CD8-positive, alpha-beta T cell (primary cell): ENCODE measurements at regions of chr6 and their contacts with region 1.

Region 1: DNA sequence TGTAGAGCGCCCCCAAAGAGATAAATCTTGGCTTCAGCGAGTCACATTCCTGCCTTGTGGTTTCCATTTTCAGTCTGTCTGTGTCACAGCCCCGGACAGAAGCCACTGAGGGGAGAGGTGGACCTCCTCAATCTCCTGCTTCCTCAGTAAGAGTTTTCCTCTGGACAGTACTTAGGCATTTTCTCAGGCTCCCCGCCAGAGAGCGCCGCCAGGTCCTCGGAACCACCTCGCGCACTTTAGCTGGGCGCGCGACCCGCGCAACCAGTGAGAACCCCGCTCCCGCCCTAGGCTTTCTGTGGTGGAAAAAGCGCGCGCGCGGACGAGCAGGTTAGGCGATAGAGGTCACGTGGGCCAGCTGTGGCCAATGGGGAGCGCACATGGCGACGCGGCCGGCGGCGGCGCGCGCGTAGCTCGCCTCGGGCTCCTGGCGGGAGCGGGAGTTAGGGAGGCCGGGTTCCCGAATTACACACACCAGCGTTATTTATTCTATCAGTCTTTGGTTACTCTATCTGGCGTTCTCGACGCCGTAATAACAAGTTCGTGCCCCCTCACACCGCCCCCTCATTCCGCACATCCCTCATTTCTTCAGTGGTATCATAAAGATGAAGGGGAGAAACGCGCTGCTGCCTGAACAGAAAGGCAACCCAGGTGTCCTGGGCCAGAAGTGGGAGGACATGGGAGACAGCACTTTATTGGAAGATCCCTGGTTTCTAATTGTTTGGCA is 19.4 kb downstream of the PXT1 start:
- DNase-seq: peak; percentile 96 to 99 (median 98)
- ATAC-seq: peak; percentile 96
- H3K4me3 ChIP-seq: peak overlapping the region; percentile 63 to 74
- H3K4me3 Mint-ChIP-seq: peak overlapping the region; percentile 95
- H3K27ac ChIP-seq: peak overlapping the region; percentile 60 to 80
- H3K27ac Mint-ChIP-seq: peak overlapping the region; percentile 95
- H3K4me1 ChIP-seq: peaks cover 12% of the 10 kb centered on the region
- H3K4me1 Mint-ChIP-seq: peaks cover 11% of the 10 kb centered on the region
- H3K27me3 ChIP-seq: no peaks in the 10 kb centered on the region
- H3K27me3 Mint-ChIP-seq: no peaks in the 10 kb centered on the region
- CTCF ChIP-seq: peak; percentile 74

Region 2: DNA sequence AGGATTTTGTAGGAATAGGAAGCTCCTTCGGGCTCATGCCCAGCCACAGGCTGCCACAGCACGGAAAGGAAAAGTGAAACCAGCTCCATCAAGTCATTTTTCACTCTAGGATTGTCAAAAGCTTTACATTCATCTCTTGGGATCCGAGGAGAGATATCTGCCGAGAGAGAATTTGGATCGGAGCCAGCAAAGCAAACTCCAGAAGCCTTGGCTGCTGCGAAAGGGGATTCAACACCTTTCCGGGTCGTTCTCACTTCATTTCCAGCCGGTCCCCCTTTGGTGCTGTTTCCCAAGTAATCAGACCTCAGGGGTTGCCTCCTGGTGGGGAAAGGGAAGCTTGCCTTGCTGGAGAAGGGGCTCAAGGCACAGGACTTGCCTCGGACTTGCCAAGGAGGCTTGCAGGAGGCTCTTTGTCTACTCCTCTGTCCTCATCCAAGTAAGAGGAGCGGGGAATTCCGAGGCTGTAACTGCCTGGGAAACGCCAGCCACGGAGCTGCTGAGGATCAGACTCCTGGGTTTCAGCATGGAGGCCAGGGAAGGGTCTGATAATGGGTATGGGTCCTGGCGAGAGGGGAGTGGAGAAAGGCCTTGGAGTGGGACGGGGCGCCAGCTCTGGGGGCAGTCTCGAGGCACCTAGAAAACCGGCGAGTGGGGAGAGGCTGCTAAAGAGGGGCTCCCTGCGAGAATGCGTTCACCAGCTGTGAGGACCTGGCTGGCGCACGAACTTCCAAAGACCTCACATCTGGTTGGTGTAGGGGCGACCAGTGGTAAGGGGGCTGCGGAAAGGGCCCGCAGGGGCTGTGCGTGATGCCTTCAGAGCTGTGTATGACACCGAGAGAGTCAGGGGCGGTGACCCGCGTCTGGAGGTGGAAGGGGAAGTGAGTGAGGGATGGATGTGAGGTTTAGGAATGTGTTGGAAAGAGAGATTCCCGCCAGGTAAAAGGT is 36.5 kb before region 1 on chr6:
- CTCF ChIA-PET with region 1: no interaction called
- POLR2A ChIA-PET with region 1: no interaction called
- intact Hi-C with region 1: no loop called
- DNase-seq: peak in 5 of 9 experiments; percentile 12 to 42 (median 21)
- ATAC-seq: peak; percentile 60
- H3K4me3 ChIP-seq: peak overlapping the region; percentile 62 to 69
- H3K4me3 Mint-ChIP-seq: peak overlapping the region; percentile 93
- H3K27ac ChIP-seq: no peak overlapping the region
- H3K27ac Mint-ChIP-seq: peak overlapping the region; percentile 3
- H3K4me1 ChIP-seq: peaks cover 11% of the 10 kb centered on the region
- H3K4me1 Mint-ChIP-seq: peaks cover 20% of the 10 kb centered on the region
- H3K27me3 ChIP-seq: peaks cover 0 to 5% of the 10 kb centered on the region in 2 experiments
- H3K27me3 Mint-ChIP-seq: peaks cover 33% of the 10 kb centered on the region
- CTCF ChIP-seq: no peak

Region 3: DNA sequence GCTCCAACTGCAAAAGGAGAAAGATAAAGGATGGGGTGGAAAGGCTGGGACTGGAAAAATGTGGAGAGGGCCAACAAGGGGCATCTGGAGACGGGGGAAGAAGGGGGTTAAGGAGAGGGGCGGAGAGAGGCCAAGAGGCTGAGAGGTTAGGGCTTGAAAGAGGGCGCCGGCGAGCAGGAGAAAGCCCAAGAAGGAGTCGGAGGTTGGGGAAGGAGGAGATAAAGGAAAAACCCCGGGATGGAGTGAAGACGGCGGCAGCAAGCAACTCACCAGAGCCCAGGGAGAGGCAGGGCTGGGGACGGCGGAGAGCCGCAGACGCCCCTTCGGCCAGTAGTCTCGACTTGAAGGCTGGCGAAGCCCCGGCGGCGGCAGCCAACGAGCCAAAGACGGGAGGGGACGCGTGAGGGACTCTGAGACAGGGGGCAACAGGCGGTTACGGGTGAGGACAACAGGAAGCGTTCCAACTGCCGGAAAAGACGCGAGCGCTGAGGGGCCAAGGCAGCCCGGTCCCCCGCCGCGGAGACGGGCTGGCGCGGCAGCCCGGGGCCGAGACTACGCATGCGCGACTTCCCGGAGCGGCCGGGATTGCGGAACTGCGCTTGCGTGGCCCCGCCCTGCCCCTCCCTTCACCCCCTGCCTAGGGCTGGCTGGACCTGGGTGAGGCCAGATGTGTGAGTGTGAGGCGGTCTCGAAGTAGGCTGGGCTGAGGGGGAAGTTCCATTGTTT is 123.8 kb after region 1 on chr6 and contains the start of gene STK38:
- CTCF ChIA-PET with region 1: interaction called, 4 read pairs
- POLR2A ChIA-PET with region 1: interaction called, 3 read pairs
- intact Hi-C with region 1: loop called in 1 of 2 experiments (anchors 2 kb)
- DNase-seq: peak; percentile 85 to 98 (median 94)
- ATAC-seq: peak; percentile 72
- H3K4me3 ChIP-seq: peak within 1 kb of the TSS; percentile 82 to 85
- H3K4me3 Mint-ChIP-seq: peak within 1 kb of the TSS; percentile 99
- H3K27ac ChIP-seq: peak within 1 kb of the TSS; percentile 92 to 94
- H3K27ac Mint-ChIP-seq: peak within 1 kb of the TSS; percentile 99
- H3K4me1 ChIP-seq: peaks cover 32% of the 10 kb centered on the region
- H3K4me1 Mint-ChIP-seq: peaks cover 52% of the 10 kb centered on the region
- H3K27me3 ChIP-seq: no peaks in the 10 kb centered on the region
- H3K27me3 Mint-ChIP-seq: no peaks in the 10 kb centered on the region
- CTCF ChIP-seq: no peak
- total RNA-seq, gene STK38: 37.6 to 38.7 TPM

Region 4: GRCh38 chr6:36576561-36576960 is 153.3 kb after region 1 on chr6:
- CTCF ChIA-PET with region 1: interaction called, 6 read pairs
- POLR2A ChIA-PET with region 1: interaction called, 3 read pairs
- intact Hi-C with region 1: loop called in 1 of 2 experiments (anchors 1 kb)
- DNase-seq: no peak
- ATAC-seq: no peak
- H3K4me3 ChIP-seq: no peak overlapping the region
- H3K4me3 Mint-ChIP-seq: no peak overlapping the region
- H3K27ac ChIP-seq: no peak overlapping the region
- H3K27ac Mint-ChIP-seq: no peak overlapping the region
- H3K4me1 ChIP-seq: peaks cover 6% of the 10 kb centered on the region
- H3K4me1 Mint-ChIP-seq: peaks cover 6% of the 10 kb centered on the region
- H3K27me3 ChIP-seq: no peaks in the 10 kb centered on the region
- H3K27me3 Mint-ChIP-seq: no peaks in the 10 kb centered on the region
- CTCF ChIP-seq: no peak

Region 5: DNA sequence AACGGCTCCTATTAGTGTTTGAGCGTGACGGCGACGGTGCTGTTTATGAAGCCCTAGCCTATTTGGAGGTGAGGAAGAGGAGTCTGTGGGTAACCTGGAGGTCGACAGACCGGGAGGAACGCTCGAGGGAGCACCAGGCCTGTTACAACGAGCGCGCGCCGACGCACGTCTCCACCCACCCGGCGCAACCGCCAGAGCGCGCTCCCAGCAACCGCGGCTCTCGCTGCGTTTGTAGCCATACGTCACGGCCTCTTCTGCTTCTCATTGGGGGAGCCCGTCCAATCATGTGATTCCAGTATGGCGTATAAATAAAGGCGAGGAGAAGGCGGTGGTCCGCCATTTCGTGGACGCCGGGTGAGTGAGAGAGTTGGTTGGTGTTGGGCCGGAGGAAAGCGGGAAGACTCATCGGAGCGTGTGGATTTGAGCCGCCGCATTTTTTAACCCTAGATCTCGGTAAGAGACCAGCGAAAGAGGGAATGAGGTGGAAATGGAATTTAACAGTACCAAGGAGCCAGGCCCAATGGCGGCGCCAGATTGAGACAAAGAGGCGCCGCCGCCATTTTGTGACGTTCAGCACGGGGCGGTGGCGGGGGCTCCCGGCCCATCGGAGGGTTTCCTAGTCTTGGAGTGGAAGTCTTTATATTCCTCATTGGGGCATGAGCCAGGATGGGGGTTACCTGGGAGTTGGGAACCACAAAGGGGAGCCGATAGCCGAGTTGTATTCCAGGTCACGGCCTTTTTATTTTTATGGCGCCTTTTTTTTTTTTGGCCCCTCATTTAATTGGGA is 171.0 kb after region 1 on chr6 and contains the start of gene SRSF3:
- CTCF ChIA-PET with region 1: interaction called, 5 read pairs
- POLR2A ChIA-PET with region 1: interaction called, 4 read pairs
- intact Hi-C with region 1: loop called (anchors 1 kb)
- DNase-seq: peak; percentile 90 to 99 (median 94)
- ATAC-seq: peak; percentile 86
- H3K4me3 ChIP-seq: peak within 1 kb of the TSS; percentile 72 to 74
- H3K4me3 Mint-ChIP-seq: peak within 1 kb of the TSS; percentile 97
- H3K27ac ChIP-seq: peak within 1 kb of the TSS; percentile 93 to 95
- H3K27ac Mint-ChIP-seq: peak within 1 kb of the TSS; percentile 99
- H3K4me1 ChIP-seq: peaks cover 42% of the 10 kb centered on the region
- H3K4me1 Mint-ChIP-seq: peaks cover 45% of the 10 kb centered on the region
- H3K27me3 ChIP-seq: no peaks in the 10 kb centered on the region
- H3K27me3 Mint-ChIP-seq: no peaks in the 10 kb centered on the region
- CTCF ChIP-seq: no peak
- total RNA-seq, gene SRSF3: 620 to 627 TPM

Region 6: DNA sequence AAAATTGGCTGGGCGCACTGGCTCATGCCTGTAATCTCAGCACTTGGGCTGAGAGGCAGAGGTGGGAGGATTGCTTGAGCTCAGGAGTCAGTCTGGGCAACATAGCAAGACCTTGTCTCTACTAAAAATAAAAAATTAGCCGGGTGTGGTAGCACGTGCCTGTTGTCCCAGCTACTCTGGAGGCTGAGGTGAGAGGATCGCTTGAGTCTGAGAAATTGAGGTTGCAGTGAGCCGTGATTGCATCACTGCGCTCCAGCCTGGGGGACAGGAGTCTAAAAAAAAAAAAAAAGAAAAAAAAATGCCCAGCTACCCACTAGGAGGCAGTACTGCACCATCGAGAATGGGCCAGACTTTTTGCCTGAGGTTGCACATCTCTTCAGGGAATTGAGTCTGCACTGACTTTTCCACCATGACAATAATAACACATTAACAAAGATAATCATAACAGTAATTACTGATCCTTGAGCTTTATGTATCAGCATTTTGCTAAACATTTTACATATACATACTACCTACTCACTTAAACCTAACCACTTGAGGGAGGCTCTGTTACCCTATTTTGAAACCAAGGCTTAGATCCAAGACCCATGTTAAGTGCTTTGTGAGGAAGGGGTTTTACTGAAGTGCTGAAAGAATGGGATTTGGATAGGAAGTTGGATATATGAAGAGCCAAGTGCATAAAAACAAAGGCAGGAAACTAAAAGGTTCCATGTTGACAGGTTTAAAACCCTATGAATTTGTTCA is 191.9 kb after region 1 on chr6:
- CTCF ChIA-PET with region 1: interaction called, 3 read pairs
- POLR2A ChIA-PET with region 1: interaction called, 3 read pairs
- intact Hi-C with region 1: loop called in 1 of 2 experiments (anchors 1 kb)
- DNase-seq: peak in 5 of 9 experiments; percentile 31 to 80 (median 54)
- ATAC-seq: peak; percentile 84
- H3K4me3 ChIP-seq: no peak overlapping the region
- H3K4me3 Mint-ChIP-seq: no peak overlapping the region
- H3K27ac ChIP-seq: no peak overlapping the region
- H3K27ac Mint-ChIP-seq: peak overlapping the region; percentile 79
- H3K4me1 ChIP-seq: no peaks in the 10 kb centered on the region
- H3K4me1 Mint-ChIP-seq: peaks cover 15% of the 10 kb centered on the region
- H3K27me3 ChIP-seq: no peaks in the 10 kb centered on the region
- H3K27me3 Mint-ChIP-seq: no peaks in the 10 kb centered on the region
- CTCF ChIP-seq: peak; percentile 60

Region 7: DNA sequence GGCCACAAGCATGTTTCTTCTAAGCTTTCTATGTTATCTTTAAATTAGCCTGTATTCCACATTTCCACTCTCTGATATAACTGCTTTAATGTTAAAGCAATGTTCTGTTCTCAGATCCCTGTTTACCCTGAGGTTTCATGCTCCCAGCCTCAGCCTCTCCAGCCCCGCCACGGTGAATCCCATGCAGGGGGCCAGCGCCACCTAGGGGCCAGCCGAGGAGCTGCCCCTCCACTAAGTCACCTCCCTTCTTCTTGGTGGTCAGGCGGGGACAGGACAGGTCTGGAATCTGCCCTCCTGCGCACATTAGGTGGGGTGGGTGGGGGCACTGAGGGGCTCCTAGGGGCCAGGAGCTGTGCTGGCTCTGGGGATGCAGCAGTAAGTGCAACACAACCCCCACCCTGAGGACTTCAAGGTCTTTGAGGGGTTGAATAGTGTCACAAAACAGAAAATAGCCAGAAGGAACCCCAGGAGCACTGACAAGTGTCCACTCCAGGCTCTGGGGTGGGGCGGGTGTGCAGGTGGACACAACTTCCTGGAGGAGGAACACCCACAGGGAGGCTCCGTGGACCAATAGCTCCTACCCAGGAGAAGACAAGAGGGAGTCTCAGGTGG is 336.0 kb after region 1 on chr6:
- CTCF ChIA-PET with region 1: interaction called, 5 read pairs
- POLR2A ChIA-PET with region 1: no interaction called
- intact Hi-C with region 1: loop called (anchors 1 to 2 kb)
- DNase-seq: peak; percentile 48 to 83 (median 81)
- ATAC-seq: peak; percentile 50
- H3K4me3 ChIP-seq: no peak overlapping the region
- H3K4me3 Mint-ChIP-seq: no peak overlapping the region
- H3K27ac ChIP-seq: no peak overlapping the region
- H3K27ac Mint-ChIP-seq: no peak overlapping the region
- H3K4me1 ChIP-seq: peaks cover 15% of the 10 kb centered on the region
- H3K4me1 Mint-ChIP-seq: peaks cover 31% of the 10 kb centered on the region
- H3K27me3 ChIP-seq: no peaks in the 10 kb centered on the region
- H3K27me3 Mint-ChIP-seq: no peaks in the 10 kb centered on the region
- CTCF ChIP-seq: peak; percentile 96